Aorta (tissue), 5 donors: ENCODE measurements at regions of chr3 and their contacts with region 1.

Region 1: DNA sequence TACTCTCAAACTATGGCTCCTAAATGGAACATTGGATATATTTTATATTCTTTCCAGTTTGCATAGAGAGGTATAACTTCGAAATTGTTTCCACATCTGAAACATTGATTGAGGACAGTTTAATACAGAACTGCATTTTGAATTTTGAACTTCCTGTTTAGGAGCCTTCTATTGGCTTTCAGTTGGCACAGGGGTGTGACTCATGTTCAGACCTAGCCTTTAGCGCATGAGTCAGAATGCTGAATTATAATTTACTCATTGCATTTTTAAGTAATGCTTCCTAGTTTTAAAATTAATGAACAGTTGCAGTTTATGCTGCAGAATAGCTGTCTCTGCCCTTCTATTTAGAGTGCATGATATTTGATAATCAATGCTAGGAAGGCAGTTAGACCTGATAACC is 751.7 kb downstream of the CADM2 start:
- DNase-seq: no peak
- ATAC-seq: no peak
- H3K4me3 ChIP-seq: no peak overlapping the region
- H3K27ac ChIP-seq: no peak overlapping the region
- H3K4me1 ChIP-seq: no peaks in the 10 kb centered on the region
- H3K27me3 ChIP-seq: no peaks in the 10 kb centered on the region

Region 2: DNA sequence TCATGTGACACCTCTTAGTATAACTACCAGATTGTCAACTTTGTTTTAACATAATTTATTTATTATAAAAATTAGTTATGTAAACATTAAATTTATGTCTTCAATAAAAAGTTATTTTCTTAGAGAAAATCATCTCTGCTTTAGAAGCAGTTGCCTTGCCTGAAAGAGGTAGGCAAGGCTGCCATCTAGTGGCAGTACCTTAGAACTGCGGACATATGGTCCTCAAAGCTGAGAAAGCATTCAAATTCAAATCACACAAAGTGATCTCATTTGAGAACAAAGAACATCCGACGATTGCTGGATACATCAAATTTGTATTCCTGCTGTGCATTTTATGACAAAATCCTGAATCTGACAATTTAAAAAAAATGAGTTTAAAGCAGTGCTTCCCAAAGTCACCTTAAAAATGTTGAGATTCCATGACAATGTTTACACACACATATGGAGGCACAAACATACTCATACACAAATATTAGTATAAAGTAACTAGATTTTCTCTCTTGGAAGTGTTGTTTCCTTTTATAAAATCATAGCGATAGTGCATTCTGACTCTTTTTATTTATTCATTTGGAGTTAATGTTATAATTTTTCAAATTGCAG is 134.3 kb before region 1 on chr3:
- intact Hi-C with region 1: no loop called
- DNase-seq: peak in 1 of 2 donors; percentile 54
- ATAC-seq: peak; percentile 68
- H3K4me3 ChIP-seq: no peak overlapping the region
- H3K27ac ChIP-seq: no peak overlapping the region
- H3K4me1 ChIP-seq: no peaks in the 10 kb centered on the region
- H3K27me3 ChIP-seq: no peaks in the 10 kb centered on the region

Region 3: DNA sequence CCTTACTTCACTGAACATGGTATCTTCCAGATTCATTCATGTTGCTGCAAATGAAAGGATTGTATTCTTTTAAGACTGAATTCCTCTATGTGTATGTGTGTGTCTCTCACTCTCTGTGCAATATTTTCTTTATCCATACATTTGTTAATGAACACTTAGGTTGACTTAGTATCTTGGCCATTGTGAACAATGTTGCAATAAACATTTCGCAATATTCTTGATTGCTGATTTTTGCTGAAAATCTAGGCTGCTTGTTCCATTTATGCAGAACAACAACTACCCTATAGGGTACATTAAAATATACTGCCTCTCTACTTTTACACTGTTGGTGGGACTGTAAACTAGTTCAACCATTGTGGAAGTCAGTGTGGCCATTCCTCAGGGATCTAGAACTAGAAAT is 19.3 kb before region 1 on chr3:
- intact Hi-C with region 1: loop called in 1 of 2 experiments (anchors 2 kb)
- DNase-seq: no peak
- ATAC-seq: no peak
- H3K4me3 ChIP-seq: no peak overlapping the region
- H3K27ac ChIP-seq: no peak overlapping the region
- H3K4me1 ChIP-seq: no peaks in the 10 kb centered on the region
- H3K27me3 ChIP-seq: no peaks in the 10 kb centered on the region